Breast epithelium (tissue), 4 donors: ENCODE measurements at regions of chr5 and their contacts with region 1.

Region 1: GRCh38 chr5:115657881-115658233 is 32.0 kb upstream of the TMED7 start:
- DNase-seq: no peak
- H3K4me3 ChIP-seq: no peak overlapping the region
- H3K27ac ChIP-seq: no peak overlapping the region
- H3K4me1 ChIP-seq: no peaks in the 10 kb centered on the region
- H3K27me3 ChIP-seq: no peaks in the 10 kb centered on the region
- CTCF ChIP-seq: no peak
- POLR2A ChIP-seq: no peak

Region 2: DNA sequence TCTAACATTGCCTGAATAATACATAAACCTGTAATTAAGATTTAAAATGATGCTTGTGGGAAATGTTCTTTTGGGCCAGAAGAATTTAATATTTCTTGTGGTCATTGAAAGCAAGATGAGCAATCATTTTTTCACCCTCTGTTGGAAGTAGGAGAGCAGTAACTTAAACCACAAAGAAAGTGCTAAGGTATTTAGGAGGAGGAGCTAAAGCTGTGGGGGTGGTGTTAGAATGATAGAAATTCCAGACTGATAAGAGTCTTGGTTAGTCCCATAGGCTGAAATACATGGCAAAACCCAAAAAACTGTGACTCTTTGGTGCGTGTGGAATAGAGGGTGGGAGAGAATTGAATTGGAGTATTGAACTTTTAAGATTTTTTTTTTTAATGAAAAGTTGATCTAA is 1897.4 kb before region 1 on chr5:
- intact Hi-C with region 1: loop called (anchors 5 kb)
- DNase-seq: no peak
- H3K4me3 ChIP-seq: no peak overlapping the region
- H3K27ac ChIP-seq: no peak overlapping the region
- H3K4me1 ChIP-seq: no peaks in the 10 kb centered on the region
- H3K27me3 ChIP-seq: no peaks in the 10 kb centered on the region
- CTCF ChIP-seq: no peak
- POLR2A ChIP-seq: no peak

Region 3: GRCh38 chr5:115686051-115686737 is 28.3 kb after region 1 on chr5:
- intact Hi-C with region 1: no loop called
- DNase-seq: no peak
- H3K4me3 ChIP-seq: no peak overlapping the region
- H3K27ac ChIP-seq: peak overlapping the region in 1 of 2 donors; percentile 19
- H3K4me1 ChIP-seq: no peaks in the 10 kb centered on the region
- H3K27me3 ChIP-seq: no peaks in the 10 kb centered on the region
- CTCF ChIP-seq: no peak
- POLR2A ChIP-seq: no peak